ENCODE measurements at regions of chr11 and their contacts with region 1.

Region 1: GRCh38 chr11:105862736-105863367 is 159.2 kb downstream of the MSANTD4 start:
- DNase-seq: no peak
- ATAC-seq: no peak
- H3K4me3 Mint-ChIP-seq: no peak overlapping the region
- H3K27ac Mint-ChIP-seq: no peak overlapping the region
- H3K4me1 Mint-ChIP-seq: no peaks in the 10 kb centered on the region
- H3K27me3 Mint-ChIP-seq: peaks cover 3% of the 10 kb centered on the region

Region 2: GRCh38 chr11:104254347-104254746 is 1608.5 kb before region 1 on chr11:
- CTCF ChIA-PET with region 1: no interaction called
- POLR2A ChIA-PET with region 1: no interaction called
- intact Hi-C with region 1: loop called in 1 of 2 experiments (anchors 5 kb)
- DNase-seq: peak; percentile 53
- ATAC-seq: peak; percentile 63
- H3K4me3 Mint-ChIP-seq: no peak overlapping the region
- H3K27ac Mint-ChIP-seq: no peak overlapping the region
- H3K4me1 Mint-ChIP-seq: no peaks in the 10 kb centered on the region
- H3K27me3 Mint-ChIP-seq: no peaks in the 10 kb centered on the region

Region 3: GRCh38 chr11:104522650-104523049 is 1340.2 kb before region 1 on chr11:
- CTCF ChIA-PET with region 1: no interaction called
- POLR2A ChIA-PET with region 1: no interaction called
- intact Hi-C with region 1: loop called in 1 of 2 experiments (anchors 10 kb)
- DNase-seq: no peak
- ATAC-seq: no peak
- H3K4me3 Mint-ChIP-seq: no peak overlapping the region
- H3K27ac Mint-ChIP-seq: no peak overlapping the region
- H3K4me1 Mint-ChIP-seq: no peaks in the 10 kb centered on the region
- H3K27me3 Mint-ChIP-seq: peaks cover 2% of the 10 kb centered on the region

Region 4: DNA sequence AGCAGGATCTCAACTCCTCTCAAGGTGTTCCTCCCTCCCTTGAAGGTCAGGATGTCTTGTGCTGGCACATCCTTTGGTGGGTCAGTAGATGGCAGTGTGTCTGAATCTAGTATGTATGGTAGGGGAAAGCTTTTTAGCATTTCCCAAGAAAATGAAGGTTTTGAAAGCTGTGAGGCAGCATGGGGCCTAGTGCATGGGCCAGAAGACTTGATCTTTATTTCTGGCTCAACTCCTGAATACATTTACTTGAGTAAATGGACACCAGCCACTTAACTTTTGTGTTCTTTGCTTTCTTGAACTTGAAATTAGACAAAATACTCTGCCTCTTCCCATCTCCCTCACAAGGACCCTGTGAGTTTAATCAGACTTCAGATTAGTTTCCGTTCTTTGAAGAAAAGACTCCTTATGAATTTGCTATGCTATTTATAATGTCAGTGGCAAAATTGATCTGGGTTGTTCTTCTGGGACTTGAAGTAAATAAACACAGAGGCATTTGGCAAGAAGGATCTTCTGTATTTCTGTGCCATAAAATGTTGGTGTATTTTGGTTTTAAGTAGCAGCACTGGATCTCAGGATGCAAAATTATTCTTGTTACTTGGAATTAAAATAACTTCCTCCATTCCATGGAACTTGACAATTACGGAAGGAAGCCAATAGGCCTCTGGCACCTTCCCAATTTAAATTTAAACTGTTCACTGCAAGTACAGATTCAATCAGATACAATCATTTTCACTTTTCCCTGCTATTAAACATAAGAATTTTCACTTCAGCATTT is 1253.4 kb before region 1 on chr11:
- CTCF ChIA-PET with region 1: no interaction called
- POLR2A ChIA-PET with region 1: no interaction called
- intact Hi-C with region 1: loop called in 1 of 2 experiments (anchors 5 kb)
- DNase-seq: peak; percentile 41
- ATAC-seq: peak; percentile 96
- H3K4me3 Mint-ChIP-seq: no peak overlapping the region
- H3K27ac Mint-ChIP-seq: peak overlapping the region; percentile 32
- H3K4me1 Mint-ChIP-seq: peaks cover 20% of the 10 kb centered on the region
- H3K27me3 Mint-ChIP-seq: no peaks in the 10 kb centered on the region

Region 5: DNA sequence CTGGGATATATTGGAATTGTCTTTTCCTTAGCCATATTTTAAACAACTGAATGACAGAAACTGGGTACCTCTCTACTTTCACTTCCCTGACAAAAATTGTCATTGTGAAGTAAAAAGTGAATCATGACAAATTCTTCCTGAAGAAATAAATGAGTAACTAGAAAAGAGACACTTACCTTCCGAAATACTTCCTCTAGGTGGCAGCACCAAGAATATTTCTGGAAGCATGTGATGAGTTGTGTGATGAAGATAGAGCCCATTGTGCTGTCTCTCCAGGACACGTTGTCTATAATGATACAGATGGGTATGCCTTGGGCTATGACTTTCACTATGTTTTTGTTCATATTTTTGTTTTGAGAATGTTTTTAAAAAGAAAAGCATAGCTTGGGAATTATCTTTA is 915.9 kb before region 1 on chr11:
- CTCF ChIA-PET with region 1: no interaction called
- POLR2A ChIA-PET with region 1: no interaction called
- intact Hi-C with region 1: loop called in 1 of 2 experiments (anchors 2 kb)
- DNase-seq: peak; percentile 32
- ATAC-seq: peak; percentile 96
- H3K4me3 Mint-ChIP-seq: no peak overlapping the region
- H3K27ac Mint-ChIP-seq: peak overlapping the region; percentile 37
- H3K4me1 Mint-ChIP-seq: peaks cover 10% of the 10 kb centered on the region
- H3K27me3 Mint-ChIP-seq: no peaks in the 10 kb centered on the region

Region 6: DNA sequence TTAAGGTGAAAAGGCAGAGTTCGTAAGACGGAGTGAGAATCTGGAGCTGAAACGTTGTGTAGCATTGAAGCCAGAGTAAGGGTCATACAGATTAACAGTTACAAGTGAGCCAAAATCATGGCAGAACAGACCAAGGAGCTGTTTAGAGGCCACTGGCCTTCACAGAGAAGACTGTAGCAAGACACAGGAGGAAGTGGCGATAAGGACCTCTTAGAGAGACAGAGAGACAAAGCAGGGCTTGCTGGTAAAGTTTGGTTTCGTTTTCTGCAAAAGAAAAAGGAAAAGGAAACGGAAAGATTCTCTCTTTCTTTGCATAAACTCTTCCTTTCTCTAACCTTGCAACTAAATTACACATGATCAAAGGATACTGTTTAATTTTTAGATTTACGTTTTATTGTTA is 297.6 kb after region 1 on chr11:
- CTCF ChIA-PET with region 1: no interaction called
- POLR2A ChIA-PET with region 1: no interaction called
- intact Hi-C with region 1: no loop called
- DNase-seq: no peak
- ATAC-seq: no peak
- H3K4me3 Mint-ChIP-seq: no peak overlapping the region
- H3K27ac Mint-ChIP-seq: no peak overlapping the region
- H3K4me1 Mint-ChIP-seq: no peaks in the 10 kb centered on the region
- H3K27me3 Mint-ChIP-seq: peaks cover 4% of the 10 kb centered on the region

Measured in activated CD4-positive, alpha-beta T cell treated with anti-CD3 and anti-CD28 coated beads for 36 hours (primary cell).